Activated T-helper 1 cell treated with anti-CD3 and anti-CD28 coated beads, Interleukin-12 subunit alpha, Interleukin-12 subunit beta, Interleukin-2, Interleukin-4 antibody, amounts not matched to agents 30 ng/mL and 10 ng/mL and 1 ng/mL, durations not matched to agents 14 hours and 24 hours and 36 hours (primary cell): ENCODE measurements at regions of chr3 and their contacts with region 1.

Region 1: DNA sequence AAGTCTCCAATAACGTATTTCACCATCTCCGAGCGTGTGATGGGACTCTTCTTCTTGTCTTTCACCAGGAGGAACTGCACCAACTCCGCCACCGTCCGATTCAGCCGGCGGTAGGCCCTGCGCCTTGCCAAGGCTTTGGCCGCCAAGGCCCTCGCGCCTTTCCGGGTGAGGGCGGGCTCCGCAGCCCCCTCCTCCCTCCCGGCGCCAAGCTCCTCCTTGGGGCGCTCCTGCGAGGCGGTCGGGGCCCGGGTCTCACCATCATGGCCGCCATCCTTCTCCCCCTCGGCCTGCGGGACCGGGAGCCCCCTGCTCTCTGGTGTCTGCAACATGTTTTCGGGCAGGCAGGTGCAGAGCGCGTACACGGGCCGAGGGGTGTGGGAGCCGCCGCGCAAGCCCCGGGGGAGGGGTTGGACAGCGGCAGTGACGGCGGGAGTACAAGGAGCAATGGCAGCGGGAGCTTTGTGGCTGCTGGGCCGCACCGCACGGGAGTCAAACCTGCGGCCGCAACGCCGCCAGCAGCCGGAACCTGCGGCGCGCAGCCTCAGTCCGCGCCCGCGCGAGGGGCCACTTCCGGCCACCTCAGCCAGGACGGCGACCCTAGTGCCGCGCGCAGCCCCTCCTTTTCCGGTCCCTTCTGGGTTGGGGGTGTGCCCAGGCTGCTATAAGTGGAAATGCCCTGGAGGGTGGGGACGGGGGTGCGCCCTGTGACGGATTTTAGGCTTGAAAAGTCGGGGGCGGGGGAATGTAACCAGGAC is at the start of gene MAGEF1:
- DNase-seq: peak; percentile 74
- H3K4me3 Mint-ChIP-seq: peak within 1 kb of the TSS; percentile 94
- H3K27ac Mint-ChIP-seq: peak within 1 kb of the TSS; percentile 77
- H3K4me1 Mint-ChIP-seq: peaks cover 37% of the 10 kb centered on the region
- H3K27me3 Mint-ChIP-seq: peaks cover 20% of the 10 kb centered on the region
- total RNA-seq, gene MAGEF1: 16.0 and 17.3 TPM in 2 replicates

Region 2: DNA sequence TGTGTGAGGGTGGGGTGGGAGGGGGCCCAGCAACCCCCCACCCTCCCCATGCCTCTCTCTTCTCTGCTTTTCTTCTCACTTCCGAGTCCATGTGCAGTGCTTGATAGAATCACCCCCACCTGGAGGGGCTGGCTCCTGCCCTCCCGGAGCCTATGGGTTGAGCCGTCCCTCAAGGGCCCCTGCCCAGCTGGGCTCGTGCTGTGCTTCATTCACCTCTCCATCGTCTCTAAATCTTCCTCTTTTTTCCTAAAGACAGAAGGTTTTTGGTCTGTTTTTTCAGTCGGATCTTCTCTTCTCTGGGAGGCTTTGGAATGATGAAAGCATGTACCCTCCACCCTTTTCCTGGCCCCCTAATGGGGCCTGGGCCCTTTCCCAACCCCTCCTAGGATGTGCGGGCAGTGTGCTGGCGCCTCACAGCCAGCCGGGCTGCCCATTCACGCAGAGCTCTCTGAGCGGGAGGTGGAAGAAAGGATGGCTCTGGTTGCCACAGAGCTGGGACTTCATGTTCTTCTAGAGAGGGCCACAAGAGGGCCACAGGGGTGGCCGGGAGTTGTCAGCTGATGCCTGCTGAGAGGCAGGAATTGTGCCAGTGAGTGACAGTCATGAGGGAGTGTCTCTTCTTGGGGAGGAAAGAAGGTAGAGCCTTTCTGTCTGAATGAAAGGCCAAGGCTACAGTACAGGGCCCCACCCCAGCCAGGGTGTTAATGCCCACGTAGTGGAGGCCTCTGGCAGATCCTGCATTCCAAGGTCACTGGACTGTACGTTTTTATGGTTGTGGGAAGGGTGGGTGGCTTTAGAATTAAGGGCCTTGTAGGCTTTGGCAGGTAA is 366.1 kb before region 1 on chr3:
- intact Hi-C with region 1: no loop called
- DNase-seq: no peak
- H3K4me3 Mint-ChIP-seq: no peak overlapping the region
- H3K27ac Mint-ChIP-seq: no peak overlapping the region
- H3K4me1 Mint-ChIP-seq: peaks cover 11% of the 10 kb centered on the region
- H3K27me3 Mint-ChIP-seq: no peaks in the 10 kb centered on the region

Region 3: DNA sequence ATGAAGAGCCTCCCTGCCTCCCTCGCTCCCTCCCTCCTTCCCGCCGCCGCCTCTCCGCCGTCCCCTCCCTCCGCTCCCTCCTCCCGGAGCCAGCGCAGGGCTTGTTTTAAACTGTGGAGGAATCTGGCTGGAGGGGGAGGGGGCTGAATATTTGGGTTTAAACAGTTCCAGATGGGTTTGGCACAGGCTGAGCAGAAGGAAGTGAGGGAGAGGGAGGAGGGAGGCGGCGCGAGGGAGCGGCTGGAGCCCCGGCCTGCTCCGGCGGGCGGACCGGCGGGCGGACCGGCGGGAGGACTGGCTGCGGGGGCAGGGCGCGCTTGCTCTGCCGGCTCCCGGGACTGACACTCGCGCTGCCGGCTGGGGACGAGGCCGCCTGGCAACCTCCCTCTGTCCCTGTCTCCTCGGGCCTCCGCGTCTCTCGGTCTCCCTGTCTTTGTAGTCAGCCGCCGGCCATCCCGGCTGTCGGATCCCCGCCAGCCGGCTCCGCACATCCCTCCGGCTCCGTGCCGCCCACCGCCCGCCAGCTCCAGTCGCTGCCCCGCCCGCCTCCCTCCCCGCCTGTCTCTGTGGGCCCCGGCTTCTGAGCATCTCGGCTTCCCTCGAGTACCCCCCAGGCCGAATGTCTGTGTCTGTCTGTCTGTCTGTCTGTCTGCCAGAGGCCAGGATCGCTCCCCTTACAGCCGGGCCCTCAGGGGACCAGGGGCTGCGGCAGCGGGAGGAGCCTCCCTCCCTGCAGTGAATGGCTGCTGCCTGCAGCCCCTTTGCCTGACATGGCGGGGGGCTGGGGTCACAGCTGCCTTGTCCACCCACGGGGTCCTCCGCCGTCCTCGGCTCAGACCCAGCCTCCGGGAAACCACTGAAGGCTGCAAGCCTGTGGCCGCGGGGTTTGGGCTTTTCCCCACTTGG is 142.5 kb before region 1 on chr3:
- intact Hi-C with region 1: loop called (anchors 2 kb)
- DNase-seq: no peak
- H3K4me3 Mint-ChIP-seq: no peak overlapping the region
- H3K27ac Mint-ChIP-seq: no peak overlapping the region
- H3K4me1 Mint-ChIP-seq: no peaks in the 10 kb centered on the region
- H3K27me3 Mint-ChIP-seq: peaks cover 54% of the 10 kb centered on the region

Region 4: DNA sequence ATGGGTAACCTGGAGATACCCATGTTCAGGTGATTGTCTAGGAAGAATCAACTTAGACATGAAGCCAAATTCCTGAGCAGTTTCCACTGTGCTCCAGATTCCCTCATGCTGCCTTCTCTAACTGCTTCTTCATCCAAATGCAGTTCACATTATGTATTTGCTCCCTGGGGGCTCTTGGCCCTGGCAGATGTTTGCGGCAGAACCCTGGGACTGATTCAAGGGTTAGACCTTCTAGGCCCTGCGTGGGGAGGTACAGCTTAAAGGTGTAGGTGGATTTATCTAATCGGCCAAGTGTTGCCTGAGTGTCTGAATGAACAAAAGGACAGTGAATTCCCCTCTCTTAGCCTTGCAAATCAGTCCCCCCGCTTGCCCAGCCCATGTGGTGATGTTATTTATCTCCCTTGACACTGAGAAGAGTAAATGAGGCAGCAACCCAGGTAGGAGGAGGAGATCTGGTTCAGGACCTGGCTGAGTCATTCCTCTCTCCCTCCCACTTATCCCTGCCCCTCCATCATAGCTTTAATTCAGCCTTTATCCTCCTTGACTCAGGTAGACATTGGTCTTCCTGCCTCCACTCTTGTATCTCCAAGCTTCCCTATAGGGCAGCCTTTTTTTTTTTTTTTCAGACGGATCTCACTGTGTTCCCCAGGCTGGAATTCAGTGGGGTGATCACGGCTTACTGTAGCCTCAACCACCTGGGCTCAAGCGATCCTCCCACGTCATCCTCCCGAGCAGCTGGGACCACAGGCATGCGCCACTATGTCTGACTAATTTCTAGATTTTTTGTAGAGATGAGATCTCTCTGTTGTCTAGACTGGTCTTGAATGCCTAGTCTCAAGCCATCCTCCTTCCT is 54.6 kb before region 1 on chr3:
- intact Hi-C with region 1: loop called (anchors 5 kb)
- DNase-seq: peak; percentile 2
- H3K4me3 Mint-ChIP-seq: peak overlapping the region; percentile 17
- H3K27ac Mint-ChIP-seq: peak overlapping the region; percentile 67
- H3K4me1 Mint-ChIP-seq: peaks cover 16% of the 10 kb centered on the region
- H3K27me3 Mint-ChIP-seq: no peaks in the 10 kb centered on the region